HCT116 (cell line): ENCODE measurements at regions of chr5 and their contacts with region 1.

Region 1: DNA sequence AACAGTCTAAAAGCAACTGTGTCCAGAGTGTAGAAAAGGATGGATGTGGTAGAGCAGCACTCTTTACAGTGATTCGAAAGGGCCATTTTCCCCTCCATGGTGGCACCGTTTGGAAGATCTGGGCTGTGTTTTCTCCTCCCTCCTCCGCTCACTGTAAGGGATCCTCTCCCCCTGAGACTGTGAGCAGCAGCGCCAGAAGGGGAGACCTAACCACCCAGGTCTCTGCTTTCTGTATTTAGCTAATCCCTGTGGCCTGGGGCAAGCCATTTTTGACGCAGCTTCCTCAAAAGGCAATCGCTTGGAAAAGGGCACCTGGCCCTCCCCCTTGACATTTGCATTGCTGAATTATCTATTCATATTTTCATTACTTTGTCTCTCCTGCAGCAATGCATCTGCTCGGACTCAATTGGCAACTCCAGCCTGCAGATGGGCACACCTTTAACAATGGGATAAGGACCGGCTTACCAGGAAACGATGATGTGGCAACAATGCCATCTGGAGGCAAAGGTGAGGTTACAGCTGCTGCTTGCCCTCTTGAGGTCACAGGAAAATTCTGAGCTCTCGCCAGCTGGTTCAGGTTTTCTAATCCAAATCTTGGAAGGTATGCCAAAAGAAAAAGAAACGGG is 244.3 kb upstream of the WWC1 start:
- DNase-seq: peak; percentile 41
- ATAC-seq: peak; percentile 93
- H3K4me3 ChIP-seq: no peak overlapping the region
- H3K27ac ChIP-seq: no peak overlapping the region
- H3K4me1 ChIP-seq: no peaks in the 10 kb centered on the region
- H3K27me3 ChIP-seq: peaks cover 16% of the 10 kb centered on the region; the same call in 1 of the 2 replicates
- CTCF ChIP-seq: peak; percentile 48 to 69 (median 55); a peak in 4 of 6 replicates
- POLR2A ChIP-seq: no peak
- RAD21 ChIP-seq: peak; percentile 73

Region 2: DNA sequence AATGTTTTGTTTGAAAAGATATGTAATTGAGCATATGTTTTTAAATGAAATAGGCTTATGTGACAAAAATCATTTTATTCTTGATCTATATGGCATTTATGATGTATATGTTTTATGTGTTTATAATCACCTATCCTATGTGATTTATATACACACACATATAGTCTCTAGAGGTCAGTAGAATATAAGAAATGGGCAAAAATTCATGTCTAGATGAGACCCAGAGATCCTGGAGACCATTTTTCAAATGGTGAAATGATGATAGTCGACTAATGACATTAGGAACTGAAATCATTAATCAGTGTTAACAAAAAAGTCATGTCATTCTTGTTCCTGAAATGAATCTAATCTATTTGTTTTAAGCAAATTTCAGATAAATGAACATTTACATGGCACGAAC is 464.9 kb before region 1 on chr5:
- CTCF ChIA-PET with region 1: no interaction called
- POLR2A ChIA-PET with region 1: no interaction called
- RAD21 ChIA-PET with region 1: no interaction called
- intact Hi-C with region 1: loop called (anchors 2 kb)
- DNase-seq: no peak
- ATAC-seq: no peak
- H3K4me3 ChIP-seq: no peak overlapping the region
- H3K27ac ChIP-seq: no peak overlapping the region
- H3K4me1 ChIP-seq: no peaks in the 10 kb centered on the region
- H3K27me3 ChIP-seq: peaks cover 23% of the 10 kb centered on the region
- CTCF ChIP-seq: peak in 1 of 3 experiments; percentile 40; a peak in 1 of 6 replicates
- POLR2A ChIP-seq: no peak
- RAD21 ChIP-seq: peak; percentile 38; the same call in 1 of the 2 replicates

Region 3: DNA sequence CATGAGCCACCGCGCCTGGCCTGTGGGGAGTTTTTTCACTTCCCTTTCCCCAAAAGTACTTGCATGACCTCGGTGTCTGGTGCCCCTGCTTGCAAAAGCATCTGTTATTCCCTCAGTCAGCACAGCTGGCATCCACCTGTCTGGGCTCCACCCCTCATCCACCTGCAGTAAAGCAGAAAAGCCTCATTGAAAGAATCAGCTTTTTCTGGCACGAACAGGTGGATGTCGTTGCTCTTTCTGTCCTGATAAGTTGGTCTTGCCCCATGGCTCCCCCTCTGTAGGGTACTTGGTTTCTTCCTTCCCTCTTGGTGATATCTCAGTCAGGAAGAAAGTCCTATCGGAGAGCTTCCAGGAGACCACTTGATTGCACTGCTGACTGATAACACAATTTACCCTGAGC is 281.7 kb after region 1 on chr5:
- CTCF ChIA-PET with region 1: no interaction called
- POLR2A ChIA-PET with region 1: no interaction called
- RAD21 ChIA-PET with region 1: no interaction called
- intact Hi-C with region 1: no loop called
- DNase-seq: no peak
- ATAC-seq: no peak
- H3K4me3 ChIP-seq: no peak overlapping the region
- H3K27ac ChIP-seq: no peak overlapping the region
- H3K4me1 ChIP-seq: peaks cover 43 to 70% of the 10 kb centered on the region in 2 experiments
- H3K27me3 ChIP-seq: no peaks in the 10 kb centered on the region
- CTCF ChIP-seq: no peak
- POLR2A ChIP-seq: no peak
- RAD21 ChIP-seq: no peak

Region 4: GRCh38 chr5:168364151-168364661 is 317.1 kb after region 1 on chr5:
- CTCF ChIA-PET with region 1: no interaction called
- POLR2A ChIA-PET with region 1: no interaction called
- RAD21 ChIA-PET with region 1: no interaction called
- intact Hi-C with region 1: no loop called
- DNase-seq: peak; percentile 19
- ATAC-seq: peak; percentile 45
- H3K4me3 ChIP-seq: no peak overlapping the region
- H3K27ac ChIP-seq: no peak overlapping the region
- H3K4me1 ChIP-seq: peaks cover 45 to 73% of the 10 kb centered on the region in 2 experiments
- H3K27me3 ChIP-seq: no peaks in the 10 kb centered on the region
- CTCF ChIP-seq: no peak
- POLR2A ChIP-seq: no peak
- RAD21 ChIP-seq: no peak